ENCODE measurements at regions of chr2 and their contacts with region 1.

Region 1: DNA sequence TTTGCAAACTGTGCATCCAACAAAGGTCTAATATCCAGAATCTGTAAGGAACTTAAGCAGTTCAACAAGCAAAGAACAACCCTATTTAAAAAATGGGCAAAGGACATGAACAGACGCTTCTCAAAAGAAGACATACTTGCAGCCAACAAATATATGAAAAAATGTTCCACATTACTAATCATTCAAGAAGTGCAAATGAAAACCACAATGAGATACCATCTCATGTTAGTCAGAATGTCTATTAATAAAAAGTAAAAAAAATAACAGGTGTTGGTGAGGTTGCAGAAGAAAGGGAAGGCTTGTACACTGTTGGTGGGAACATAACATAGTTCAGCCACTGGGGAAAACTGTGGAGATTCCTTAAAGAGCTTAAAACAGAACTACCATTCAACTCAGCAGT is 126.2 kb downstream of the NAT8 start:
- DNase-seq: peak; percentile 12
- ATAC-seq: no peak
- H3K4me3 ChIP-seq: no peak overlapping the region
- H3K27ac ChIP-seq: no peak overlapping the region
- H3K4me1 ChIP-seq: no peaks in the 10 kb centered on the region
- H3K27me3 ChIP-seq: no peaks in the 10 kb centered on the region
- CTCF ChIP-seq: no peak
- POLR2A ChIP-seq: no peak
- RAD21 ChIP-seq: no peak

Region 2: DNA sequence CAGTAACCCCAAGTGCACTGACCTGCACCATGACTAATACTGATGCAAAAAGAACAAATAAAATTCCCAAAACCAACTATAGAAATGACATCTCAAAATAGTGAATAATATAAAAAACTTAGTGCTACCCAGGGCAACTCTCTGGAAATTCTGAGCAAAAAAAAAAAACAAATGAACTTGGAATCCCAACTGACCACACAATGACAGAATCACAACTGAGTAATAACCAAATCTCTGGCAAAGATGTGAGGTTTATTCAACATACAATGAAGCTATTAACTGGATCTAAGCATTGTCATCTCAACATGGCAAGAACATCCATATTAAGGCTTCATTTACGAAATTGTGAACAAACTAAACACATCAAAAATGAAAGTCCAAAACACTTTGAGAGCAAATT is 712.9 kb before region 1 on chr2:
- CTCF ChIA-PET with region 1: no interaction called
- POLR2A ChIA-PET with region 1: no interaction called
- dilution Hi-C with region 1: no loop called
- in situ Hi-C with region 1: no loop called
- intact Hi-C with region 1: no loop called
- DNase-seq: peak; percentile 66
- ATAC-seq: no peak
- H3K4me3 ChIP-seq: no peak overlapping the region
- H3K27ac ChIP-seq: no peak overlapping the region
- H3K4me1 ChIP-seq: no peaks in the 10 kb centered on the region
- H3K27me3 ChIP-seq: no peaks in the 10 kb centered on the region
- CTCF ChIP-seq: no peak
- POLR2A ChIP-seq: no peak
- RAD21 ChIP-seq: no peak

Region 3: GRCh38 chr2:73418343-73418742 is 97.7 kb before region 1 on chr2:
- CTCF ChIA-PET with region 1: no interaction called
- POLR2A ChIA-PET with region 1: no interaction called
- dilution Hi-C with region 1: no loop called
- in situ Hi-C with region 1: loop called (anchors 25 kb)
- intact Hi-C with region 1: no loop called
- DNase-seq: peak; percentile 91
- ATAC-seq: peak; percentile 90
- H3K4me3 ChIP-seq: no peak overlapping the region
- H3K27ac ChIP-seq: no peak overlapping the region
- H3K4me1 ChIP-seq: no peaks in the 10 kb centered on the region
- H3K27me3 ChIP-seq: no peaks in the 10 kb centered on the region
- CTCF ChIP-seq: no peak
- POLR2A ChIP-seq: no peak
- RAD21 ChIP-seq: no peak

Region 4: DNA sequence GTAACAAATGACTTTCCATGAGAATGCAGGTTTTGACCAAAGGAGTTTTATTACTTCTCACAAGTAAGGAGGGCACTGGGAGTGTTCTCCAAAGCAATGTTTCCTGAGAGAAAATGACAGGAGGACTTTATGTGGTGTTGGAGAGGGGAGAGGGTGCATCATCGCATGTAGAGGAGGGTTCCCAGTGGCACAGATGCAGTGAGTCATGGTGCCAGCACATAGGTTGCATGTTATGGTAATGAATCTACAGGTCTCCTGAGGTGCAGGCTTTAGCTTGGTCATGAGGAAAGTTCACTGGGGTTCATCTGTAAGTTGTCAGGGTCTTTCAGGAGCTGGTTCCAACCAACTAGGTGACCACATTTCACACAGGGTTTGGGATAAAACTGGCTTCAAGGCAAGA is 95.8 kb after region 1 on chr2:
- CTCF ChIA-PET with region 1: no interaction called
- POLR2A ChIA-PET with region 1: no interaction called
- dilution Hi-C with region 1: no loop called
- in situ Hi-C with region 1: no loop called
- intact Hi-C with region 1: no loop called
- DNase-seq: peak; percentile 31
- ATAC-seq: no peak; the same call in 1 of the 2 replicates
- H3K4me3 ChIP-seq: no peak overlapping the region
- H3K27ac ChIP-seq: no peak overlapping the region
- H3K4me1 ChIP-seq: no peaks in the 10 kb centered on the region
- H3K27me3 ChIP-seq: no peaks in the 10 kb centered on the region
- CTCF ChIP-seq: no peak
- POLR2A ChIP-seq: no peak
- RAD21 ChIP-seq: no peak

Measured in IMR-90 (cell line).